Activated B cell treated with CpG ODN at 0.5 μM for 24 hours (primary cell): ENCODE measurements at regions of chr7 and their contacts with region 1.

Region 1: GRCh38 chr7:32942786-32943653 is 14.2 kb upstream of the FKBP9 start:
- DNase-seq: peak; percentile 72
- ATAC-seq: peak; percentile 81
- H3K4me3 Mint-ChIP-seq: peak overlapping the region; percentile 92
- H3K27ac Mint-ChIP-seq: no peak overlapping the region
- H3K4me1 Mint-ChIP-seq: peaks cover 23% of the 10 kb centered on the region
- H3K27me3 Mint-ChIP-seq: no peaks in the 10 kb centered on the region
- CTCF ChIP-seq: no peak

Region 2: DNA sequence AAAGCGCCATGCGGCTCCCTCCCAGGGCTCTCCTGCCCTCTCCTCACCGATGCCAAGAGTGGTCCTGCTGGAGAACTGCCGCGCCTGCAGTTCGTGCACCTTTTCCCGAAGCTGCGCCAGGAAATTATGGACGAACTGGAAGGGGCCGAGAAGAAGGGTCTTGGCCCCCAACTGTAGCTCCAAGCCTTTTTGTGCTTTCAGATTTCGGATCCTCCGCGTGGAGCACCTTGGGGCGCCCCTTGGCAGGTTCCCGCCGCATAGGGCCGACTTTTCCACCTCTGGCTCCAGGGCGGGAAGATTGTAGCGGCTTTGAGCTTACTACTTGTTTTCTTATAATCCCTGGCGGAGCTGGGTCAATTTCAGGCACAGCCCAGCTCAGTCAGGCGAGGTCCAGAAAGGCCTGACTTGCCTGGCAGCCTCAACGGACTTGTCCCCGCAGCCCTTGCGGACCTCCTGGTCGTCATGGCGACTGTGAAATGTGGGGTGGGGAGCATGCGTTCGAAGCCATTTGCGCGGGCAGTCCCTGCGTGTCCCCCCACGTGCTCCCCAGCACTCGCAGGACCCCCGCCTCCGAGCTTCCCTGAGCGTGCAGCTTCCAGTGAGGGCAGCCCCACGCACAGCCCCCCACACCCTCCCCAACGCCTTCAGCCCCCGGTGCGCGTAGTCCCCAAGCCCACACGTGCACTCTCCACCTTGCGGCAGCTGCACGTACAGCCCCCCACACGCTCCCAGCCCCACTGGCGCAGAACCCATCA is 181.4 kb before region 1 on chr7:
- CTCF ChIA-PET with region 1: interaction called, 3 read pairs
- POLR2A ChIA-PET with region 1: no interaction called
- intact Hi-C with region 1: loop called (anchors 1 kb)
- DNase-seq: no peak
- ATAC-seq: no peak
- H3K4me3 Mint-ChIP-seq: peak overlapping the region; percentile 53
- H3K27ac Mint-ChIP-seq: no peak overlapping the region
- H3K4me1 Mint-ChIP-seq: peaks cover 15% of the 10 kb centered on the region
- H3K27me3 Mint-ChIP-seq: peaks cover 27% of the 10 kb centered on the region
- CTCF ChIP-seq: no peak

Region 3: GRCh38 chr7:32846701-32847100 is 96.3 kb before region 1 on chr7:
- CTCF ChIA-PET with region 1: interaction called, 74 read pairs
- POLR2A ChIA-PET with region 1: interaction called, 10 read pairs
- intact Hi-C with region 1: loop called (anchors 1 kb)
- DNase-seq: peak; percentile 81
- ATAC-seq: peak; percentile 100
- H3K4me3 Mint-ChIP-seq: no peak overlapping the region
- H3K27ac Mint-ChIP-seq: no peak overlapping the region
- H3K4me1 Mint-ChIP-seq: peaks cover 5% of the 10 kb centered on the region
- H3K27me3 Mint-ChIP-seq: peaks cover 18% of the 10 kb centered on the region
- CTCF ChIP-seq: peak; percentile 52

Region 4: DNA sequence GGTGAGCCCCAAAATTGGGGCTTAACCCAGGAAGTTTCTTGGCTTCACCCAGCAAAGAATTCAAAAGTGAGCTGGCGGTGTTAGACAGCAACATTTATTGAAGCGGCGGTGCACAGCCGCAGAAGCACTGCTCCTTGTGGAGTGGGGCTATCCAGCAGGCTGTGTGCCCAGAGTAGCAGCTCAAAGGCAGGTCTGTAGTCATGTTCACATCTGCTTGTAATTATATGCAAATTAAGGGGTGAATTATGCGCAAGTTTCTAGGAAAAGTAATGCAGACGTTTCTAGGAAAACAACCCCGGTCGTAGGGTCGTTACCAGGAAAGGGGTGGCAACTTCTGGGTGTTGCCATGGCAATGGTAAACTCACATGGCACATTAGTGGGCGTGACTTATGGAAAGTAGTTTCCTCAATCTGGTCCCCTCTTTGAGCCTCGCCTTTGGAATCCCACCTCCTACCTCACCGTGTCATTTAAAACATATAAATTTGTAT is 37.8 kb before region 1 on chr7:
- CTCF ChIA-PET with region 1: no interaction called
- POLR2A ChIA-PET with region 1: interaction called, 8 read pairs
- intact Hi-C with region 1: loop called (anchors 5 kb)
- DNase-seq: no peak
- ATAC-seq: peak; percentile 85
- H3K4me3 Mint-ChIP-seq: peak overlapping the region; percentile 73
- H3K27ac Mint-ChIP-seq: peak overlapping the region; percentile 69
- H3K4me1 Mint-ChIP-seq: peaks cover 7% of the 10 kb centered on the region
- H3K27me3 Mint-ChIP-seq: no peaks in the 10 kb centered on the region
- CTCF ChIP-seq: no peak

Region 5: DNA sequence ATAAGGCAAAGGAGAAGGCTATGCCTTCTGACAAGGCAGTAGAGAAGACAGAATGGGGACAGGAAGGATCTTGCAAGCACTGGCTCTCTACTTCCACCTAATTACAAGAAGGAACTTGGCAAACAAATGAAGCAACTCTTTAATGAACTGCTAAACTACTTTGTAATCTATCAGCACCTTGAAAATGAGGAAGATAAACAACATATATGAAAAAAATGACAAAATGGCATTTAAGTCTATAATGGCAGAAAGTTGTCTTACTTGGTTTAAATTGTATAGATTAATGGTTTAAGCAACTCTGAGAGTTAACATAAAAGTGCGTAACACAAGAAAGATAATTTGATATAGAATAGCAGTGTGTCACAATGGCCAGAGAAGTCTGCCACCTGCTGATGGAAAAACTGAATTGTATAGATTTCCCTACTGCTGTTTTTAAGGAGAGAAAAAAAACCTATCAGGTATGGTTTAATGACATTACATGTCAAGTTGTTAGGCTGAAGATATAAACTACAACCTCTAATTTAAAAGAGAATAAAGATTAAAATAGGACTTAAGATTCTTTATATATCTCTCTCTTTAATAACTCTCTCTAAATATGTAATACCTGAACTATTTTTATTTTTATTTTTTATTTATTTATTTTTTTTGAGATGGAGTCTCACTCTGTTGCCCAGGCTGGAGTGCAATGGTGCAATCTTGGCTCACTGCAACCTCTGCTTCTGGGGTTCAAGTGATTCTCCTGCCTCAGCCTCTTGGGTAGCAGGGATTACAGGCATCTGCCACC is 107.7 kb after region 1 on chr7:
- CTCF ChIA-PET with region 1: interaction called, 3 read pairs
- POLR2A ChIA-PET with region 1: interaction called, 4 read pairs
- intact Hi-C with region 1: loop called (anchors 1 kb)
- DNase-seq: no peak
- ATAC-seq: peak; percentile 64
- H3K4me3 Mint-ChIP-seq: peak overlapping the region; percentile 9
- H3K27ac Mint-ChIP-seq: peak overlapping the region; percentile 56
- H3K4me1 Mint-ChIP-seq: peaks cover 66% of the 10 kb centered on the region
- H3K27me3 Mint-ChIP-seq: no peaks in the 10 kb centered on the region
- CTCF ChIP-seq: no peak